Heart left ventricle (tissue), 16 donors: ENCODE measurements at regions of chr21 and their contacts with region 1.

Region 1: DNA sequence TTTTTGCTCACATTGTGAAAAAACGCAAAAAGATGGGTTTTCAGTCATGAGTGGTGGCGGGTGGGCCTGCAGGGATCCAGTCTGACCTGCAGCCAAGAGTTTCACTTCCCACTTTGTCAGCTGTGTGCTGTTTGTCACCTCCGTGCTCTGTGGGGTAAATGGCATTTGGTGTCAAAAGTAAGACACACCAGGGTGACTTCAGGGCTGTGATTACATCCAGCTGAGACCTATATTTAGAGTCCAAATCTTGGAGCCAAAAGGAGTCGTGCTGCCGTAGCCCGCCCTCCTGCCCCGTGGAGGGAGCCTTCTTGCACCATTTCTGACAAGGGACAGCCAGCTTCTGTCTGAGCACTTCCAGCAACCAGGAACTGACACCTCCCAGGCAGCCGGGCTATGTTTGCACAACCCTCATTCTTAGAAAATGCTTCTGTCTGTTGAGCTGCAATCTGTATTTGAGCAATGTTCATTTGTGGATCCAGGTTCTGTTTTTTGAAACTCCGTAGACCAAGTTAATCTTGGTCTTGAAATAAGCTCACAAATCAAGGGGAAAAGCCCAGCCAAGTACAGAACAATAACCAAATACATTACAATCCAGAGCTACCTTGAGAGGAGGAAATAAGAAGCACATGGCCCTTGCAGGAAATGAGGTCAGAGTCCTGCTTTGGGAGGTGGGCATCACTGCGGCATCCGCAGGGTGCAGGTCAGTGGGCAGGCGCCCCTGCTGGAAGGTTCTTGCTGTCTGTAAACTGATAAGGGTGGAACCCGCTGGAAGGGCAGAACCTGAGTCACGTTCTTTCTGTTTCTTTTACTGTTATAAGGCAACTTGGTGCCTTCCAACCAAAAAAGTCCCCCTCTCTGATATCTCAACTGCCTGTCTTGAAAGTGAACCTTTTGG is 14.4 kb downstream of the ABCG1 start:
- DNase-seq: peak; percentile 66 to 89 (median 83)
- ATAC-seq: peak; percentile 68 to 86 (median 81)
- H3K4me3 ChIP-seq: peak overlapping the region in 7 of 12 donors; percentile 3 to 62 (median 13)
- H3K27ac ChIP-seq: peak overlapping the region; percentile 60 to 91 (median 84)
- H3K4me1 ChIP-seq: peaks cover 27 to 99% (median 86%) of the 10 kb centered on the region in 12 donors
- H3K27me3 ChIP-seq: no peaks in the 10 kb centered on the region
- CTCF ChIP-seq: peak in 9 of 12 donors; percentile 12 to 48 (median 38)
- POLR2A ChIP-seq: no peak

Region 2: GRCh38 chr21:42171091-42172053 is 61.9 kb before region 1 on chr21:
- intact Hi-C with region 1: loop called in 4 of 10 experiments (anchors 5 to 10 kb)
- DNase-seq: peak; percentile 67 to 81 (median 71)
- ATAC-seq: peak; percentile 85 to 92 (median 86)
- H3K4me3 ChIP-seq: no peak overlapping the region
- H3K27ac ChIP-seq: peak overlapping the region in 10 of 12 donors; percentile 1 to 50 (median 35)
- H3K4me1 ChIP-seq: peaks cover 0 to 15% (median 0%) of the 10 kb centered on the region in 12 donors
- H3K27me3 ChIP-seq: no peaks in the 10 kb centered on the region
- CTCF ChIP-seq: no peak
- POLR2A ChIP-seq: no peak

Region 3: DNA sequence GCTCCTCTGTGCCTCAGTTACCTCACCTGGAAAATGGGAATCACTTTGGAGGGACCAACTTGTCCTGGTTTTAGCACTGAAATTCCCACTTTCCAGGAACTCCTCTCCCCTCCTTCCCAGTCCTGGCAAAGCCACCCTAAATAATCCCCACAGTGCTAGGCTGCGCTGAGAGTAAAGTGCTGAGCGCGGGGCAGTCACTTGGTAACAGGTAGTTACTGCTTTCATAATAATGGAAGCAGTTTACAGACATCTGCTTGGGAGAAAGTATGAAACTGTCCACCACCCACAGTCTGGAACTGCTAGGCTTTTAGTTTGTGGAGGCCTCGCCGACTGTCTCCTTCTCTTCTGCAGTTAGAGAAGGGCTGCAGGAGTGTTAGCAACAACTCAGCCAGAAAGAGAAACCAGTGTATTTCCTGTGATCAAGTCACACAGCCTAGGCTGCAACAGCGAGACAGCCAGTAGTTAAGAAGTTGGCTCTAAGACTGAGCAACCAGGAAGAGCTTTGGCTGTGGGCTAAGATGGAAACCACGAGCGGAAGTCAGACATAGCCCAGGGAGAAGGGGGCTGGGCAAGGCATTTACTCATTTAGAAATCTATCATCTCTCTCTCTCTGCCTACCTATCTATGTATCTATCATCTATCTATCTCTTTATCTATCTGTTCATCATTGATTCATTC is 45.2 kb before region 1 on chr21:
- intact Hi-C with region 1: loop called in 1 of 10 experiments (anchors 10 kb)
- DNase-seq: peak in 4 of 5 donors; percentile 44 to 60 (median 56)
- ATAC-seq: peak; percentile 55 to 91 (median 77)
- H3K4me3 ChIP-seq: peak overlapping the region in 1 of 12 donors; percentile 9
- H3K27ac ChIP-seq: peak overlapping the region in 11 of 12 donors; percentile 2 to 93 (median 57)
- H3K4me1 ChIP-seq: peaks cover 0 to 65% (median 5%) of the 10 kb centered on the region in 12 donors
- H3K27me3 ChIP-seq: no peaks in the 10 kb centered on the region
- CTCF ChIP-seq: no peak
- POLR2A ChIP-seq: no peak